Upper lobe of right lung (tissue), 1 donor: ENCODE measurements at regions of chr12 and their contacts with region 1.

Region 1: DNA sequence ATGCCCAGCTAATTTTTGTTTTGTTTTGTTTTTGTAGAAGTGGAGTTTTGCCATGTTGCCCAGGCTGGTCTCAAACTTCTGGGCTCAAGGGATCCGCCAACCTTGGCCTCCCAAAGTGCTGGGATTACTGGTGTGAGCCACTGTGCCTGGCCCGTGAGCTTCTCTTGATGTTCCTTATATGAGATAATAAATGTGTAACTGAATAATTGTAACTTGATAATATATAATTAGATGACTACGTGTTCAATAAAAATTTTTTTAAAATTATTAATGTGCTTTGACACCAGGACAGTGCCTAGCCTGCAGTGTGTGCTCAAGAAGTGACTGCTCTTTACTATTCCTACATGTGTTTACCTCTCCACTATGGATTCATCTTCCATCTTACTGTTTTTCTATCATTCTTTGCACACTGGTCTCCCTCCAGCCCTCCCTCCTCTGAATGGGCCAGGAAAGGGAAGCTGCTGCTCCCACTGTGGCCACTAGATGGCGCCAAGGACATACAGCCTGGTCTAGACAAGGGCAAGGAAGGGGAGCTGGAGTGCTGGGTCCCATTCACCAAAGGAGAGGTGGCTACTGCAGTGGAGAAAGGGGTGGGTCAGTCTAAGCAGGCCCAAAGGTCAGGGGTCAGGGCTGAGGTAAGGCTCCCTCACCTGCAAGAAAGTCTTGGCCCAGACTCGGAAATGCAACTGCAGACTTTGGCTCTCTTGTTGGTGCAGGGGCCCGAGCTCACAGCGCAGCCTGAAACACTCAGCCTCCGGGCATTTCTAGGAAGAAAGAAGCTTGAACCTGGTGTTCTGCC is 14.7 kb upstream of the ZNF385A start:
- DNase-seq: peak; percentile 89
- ATAC-seq: peak; percentile 94
- H3K4me3 ChIP-seq: no peak overlapping the region
- H3K27ac ChIP-seq: no peak overlapping the region
- H3K4me1 ChIP-seq: no peaks in the 10 kb centered on the region
- H3K27me3 ChIP-seq: no peaks in the 10 kb centered on the region
- CTCF ChIP-seq: peak; percentile 99

Region 2: GRCh38 chr12:53939141-53940108 is 459.8 kb before region 1 on chr12:
- intact Hi-C with region 1: no loop called
- DNase-seq: no peak
- ATAC-seq: peak; percentile 74
- H3K4me3 ChIP-seq: no peak overlapping the region
- H3K27ac ChIP-seq: no peak overlapping the region
- H3K4me1 ChIP-seq: peaks cover 6% of the 10 kb centered on the region
- H3K27me3 ChIP-seq: peaks cover 100% of the 10 kb centered on the region
- CTCF ChIP-seq: no peak

Region 3: DNA sequence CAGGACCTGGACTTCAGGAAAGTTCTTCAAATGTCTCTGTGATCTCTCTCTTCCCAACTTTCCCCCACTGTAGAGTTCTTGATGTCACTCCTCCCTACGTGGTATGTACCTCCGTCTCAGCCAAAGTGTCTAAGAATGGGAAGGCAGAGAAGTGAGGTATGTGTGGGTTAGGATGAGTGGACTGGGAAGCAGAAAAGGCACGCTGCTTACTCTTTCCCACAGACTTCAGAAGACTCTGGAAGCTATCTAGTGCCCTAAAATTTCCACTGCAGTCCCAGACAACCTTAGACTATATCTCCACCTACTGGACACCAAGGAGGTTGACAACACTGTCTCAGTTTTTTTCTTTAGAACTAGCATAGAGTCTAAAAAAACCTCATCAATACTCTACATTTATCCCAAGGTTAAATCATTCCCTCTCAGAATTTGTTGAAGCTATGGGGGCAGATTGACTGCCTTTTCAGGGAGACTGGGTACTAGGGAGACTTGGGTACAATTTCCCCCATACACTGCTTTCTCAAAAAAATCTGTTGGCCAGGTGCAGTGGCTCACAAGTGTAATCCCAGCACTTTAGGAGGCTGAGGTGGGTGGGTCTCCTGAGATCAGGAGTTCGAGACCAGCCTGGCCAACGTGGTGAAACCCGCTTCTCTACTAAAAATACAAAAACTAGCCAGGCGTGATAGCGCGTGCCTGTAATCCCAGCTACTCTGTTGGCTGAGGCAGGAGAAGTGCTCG is 40.5 kb after region 1 on chr12:
- intact Hi-C with region 1: loop called (anchors 2 kb)
- DNase-seq: no peak
- ATAC-seq: peak; percentile 96
- H3K4me3 ChIP-seq: no peak overlapping the region
- H3K27ac ChIP-seq: no peak overlapping the region
- H3K4me1 ChIP-seq: peaks cover 6% of the 10 kb centered on the region
- H3K27me3 ChIP-seq: no peaks in the 10 kb centered on the region
- CTCF ChIP-seq: peak; percentile 81